ENCODE measurements at regions of chr20 and their contacts with region 1.

Region 1: DNA sequence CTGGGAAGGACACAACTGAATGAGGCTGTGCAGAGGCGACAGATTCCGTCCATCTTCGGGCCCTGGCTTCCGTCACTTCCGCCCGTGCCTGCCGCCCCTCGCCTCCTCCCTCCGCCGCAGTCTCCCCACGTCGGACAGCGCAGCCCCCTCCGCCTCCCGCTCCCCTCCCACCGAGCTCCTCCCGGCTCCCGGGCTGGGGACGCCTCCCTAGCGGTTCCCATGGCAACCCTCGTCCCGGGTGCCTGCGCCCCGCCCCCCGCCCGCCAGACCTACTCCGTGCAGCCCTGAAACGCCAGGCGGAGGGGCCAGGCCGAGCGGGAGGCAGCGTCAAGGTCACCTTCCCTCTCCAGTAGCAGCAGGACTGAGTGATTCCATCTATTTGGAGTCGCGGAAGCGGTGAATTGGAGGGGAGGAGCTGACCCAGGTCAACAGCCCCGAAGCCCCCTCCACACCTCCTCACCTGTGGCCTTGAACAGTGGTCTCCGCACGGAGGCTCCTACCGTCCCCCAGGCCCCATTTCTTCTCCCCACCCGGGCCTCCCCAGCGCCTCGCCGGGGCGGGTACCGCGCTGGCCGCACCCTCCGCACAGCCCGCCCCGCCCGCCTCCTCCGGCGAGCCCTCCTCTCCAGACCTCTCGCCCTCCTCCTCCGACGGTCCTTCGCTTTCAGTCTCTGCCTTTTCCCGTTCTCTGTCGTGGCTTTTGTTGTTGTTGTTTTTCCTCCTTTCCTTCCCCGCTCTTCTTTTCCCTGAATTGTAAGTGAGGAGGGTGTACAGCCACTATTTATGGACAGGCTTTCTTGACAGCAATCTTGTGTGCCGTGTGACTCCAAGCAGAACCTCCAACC is 951 bp downstream of the NRSN2 start:
- DNase-seq: peak; percentile 65
- ATAC-seq: peak; percentile 82
- H3K4me3 Mint-ChIP-seq: peak overlapping the region; percentile 88
- H3K27ac Mint-ChIP-seq: peak overlapping the region; percentile 68
- H3K4me1 Mint-ChIP-seq: peaks cover 13% of the 10 kb centered on the region
- H3K27me3 Mint-ChIP-seq: no peaks in the 10 kb centered on the region
- CTCF ChIP-seq: no peak

Region 2: DNA sequence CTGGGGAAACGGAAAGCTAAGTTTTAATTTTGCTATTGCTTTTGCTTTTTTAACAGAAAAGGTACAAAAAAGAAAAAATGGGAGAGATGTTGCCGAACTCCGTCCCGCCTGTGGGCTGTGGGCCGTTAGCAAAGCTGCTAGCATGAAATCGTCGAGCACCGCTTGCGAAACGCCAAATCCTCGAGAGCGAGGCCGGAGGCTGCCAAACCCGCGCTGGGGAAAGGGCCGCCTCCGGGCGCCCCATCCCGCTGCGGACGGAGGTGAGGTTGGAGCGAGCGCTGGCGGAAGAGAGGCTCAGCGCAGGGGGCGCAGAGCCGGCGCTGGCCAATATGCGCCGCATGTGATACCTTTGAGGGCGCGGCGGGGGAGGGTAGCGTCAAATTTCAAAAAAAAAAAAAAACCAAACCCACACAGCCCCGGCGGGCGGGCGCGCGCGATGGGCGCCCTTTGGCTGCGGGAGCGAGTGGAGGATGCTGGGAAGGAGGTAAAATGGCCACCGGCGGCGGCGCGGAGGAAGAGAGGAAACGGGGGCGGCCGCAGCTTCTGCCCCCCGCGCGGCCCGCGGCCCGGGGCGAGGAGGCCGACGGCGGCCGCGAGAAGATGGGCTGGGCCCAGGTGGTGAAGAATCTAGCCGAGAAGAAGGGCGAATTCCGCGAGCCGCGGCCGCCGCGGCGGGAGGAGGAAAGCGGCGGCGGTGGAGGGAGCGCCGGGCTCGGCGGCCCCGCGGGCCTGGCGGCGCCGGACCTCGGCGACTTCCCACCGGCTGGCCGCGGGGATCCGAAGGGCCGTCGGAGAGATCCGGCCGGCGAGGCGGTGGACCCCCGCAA is 50.6 kb before region 1 on chr20 and contains the start of gene ZCCHC3:
- CTCF ChIA-PET with region 1: no interaction called
- POLR2A ChIA-PET with region 1: interaction called, 7 read pairs
- intact Hi-C with region 1: loop called (anchors 2 kb)
- DNase-seq: peak; percentile 82
- ATAC-seq: peak; percentile 88
- H3K4me3 Mint-ChIP-seq: peak within 1 kb of the TSS; percentile 98
- H3K27ac Mint-ChIP-seq: peak within 1 kb of the TSS; percentile 98
- H3K4me1 Mint-ChIP-seq: peaks cover 44% of the 10 kb centered on the region
- H3K27me3 Mint-ChIP-seq: no peaks in the 10 kb centered on the region
- CTCF ChIP-seq: no peak
- total RNA-seq, gene ZCCHC3: 25.9 and 28.1 TPM in 2 replicates

Region 3: GRCh38 chr20:309841-310644 is 37.8 kb before region 1 on chr20:
- CTCF ChIA-PET with region 1: no interaction called
- POLR2A ChIA-PET with region 1: interaction called, 4 read pairs
- intact Hi-C with region 1: loop called (anchors 1 kb)
- DNase-seq: peak; percentile 77
- ATAC-seq: peak; percentile 100
- H3K4me3 Mint-ChIP-seq: peak overlapping the region; percentile 86
- H3K27ac Mint-ChIP-seq: peak overlapping the region; percentile 86
- H3K4me1 Mint-ChIP-seq: peaks cover 18% of the 10 kb centered on the region
- H3K27me3 Mint-ChIP-seq: no peaks in the 10 kb centered on the region
- CTCF ChIP-seq: no peak

Region 4: GRCh38 chr20:330233-331149 is 17.4 kb before region 1 on chr20:
- CTCF ChIA-PET with region 1: interaction called, 19 read pairs
- POLR2A ChIA-PET with region 1: interaction called, 27 read pairs
- intact Hi-C with region 1: loop called (anchors 1 kb)
- DNase-seq: peak; percentile 34
- ATAC-seq: peak; percentile 51
- H3K4me3 Mint-ChIP-seq: peak overlapping the region; percentile 19
- H3K27ac Mint-ChIP-seq: peak overlapping the region; percentile 61
- H3K4me1 Mint-ChIP-seq: peaks cover 33% of the 10 kb centered on the region
- H3K27me3 Mint-ChIP-seq: no peaks in the 10 kb centered on the region
- CTCF ChIP-seq: peak; percentile 15

Region 5: DNA sequence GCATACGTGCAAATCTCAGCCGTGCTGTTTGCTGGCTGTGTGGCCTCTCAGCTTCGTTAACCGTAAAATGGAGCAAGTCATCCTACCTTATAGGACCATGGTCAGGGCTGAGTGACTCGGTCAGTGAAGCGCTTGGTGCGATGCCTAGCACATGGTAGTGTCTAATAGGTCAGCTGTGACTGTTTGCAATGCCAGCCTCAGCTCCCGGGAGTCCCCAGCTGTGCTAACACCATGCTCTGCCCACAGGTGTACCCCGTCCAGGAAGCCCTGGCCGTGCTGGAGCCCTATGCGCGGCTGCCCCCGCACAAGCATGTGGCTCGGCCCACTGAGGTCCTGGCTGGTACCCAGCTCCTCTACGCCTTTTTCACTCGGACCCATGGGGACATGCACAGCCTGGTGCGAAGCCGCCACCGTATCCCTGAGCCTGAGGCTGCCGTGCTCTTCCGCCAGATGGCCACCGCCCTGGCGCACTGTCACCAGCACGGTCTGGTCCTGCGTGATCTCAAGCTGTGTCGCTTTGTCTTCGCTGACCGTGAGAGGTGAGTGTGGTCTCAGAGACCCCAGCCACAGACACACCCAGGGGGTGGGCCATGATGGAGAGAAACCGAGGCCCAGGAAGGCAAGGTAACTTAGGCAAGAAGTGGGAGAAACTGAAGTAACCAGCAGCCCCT is 43.3 kb after region 1 on chr20:
- CTCF ChIA-PET with region 1: no interaction called
- POLR2A ChIA-PET with region 1: no interaction called
- intact Hi-C with region 1: no loop called
- DNase-seq: no peak
- ATAC-seq: no peak
- H3K4me3 Mint-ChIP-seq: no peak overlapping the region
- H3K27ac Mint-ChIP-seq: no peak overlapping the region
- H3K4me1 Mint-ChIP-seq: no peaks in the 10 kb centered on the region
- H3K27me3 Mint-ChIP-seq: no peaks in the 10 kb centered on the region
- CTCF ChIP-seq: no peak

Measured in activated B cell treated with CpG ODN at 0.5 μM for 24 hours (primary cell).